ENCODE measurements at regions of chr1 and their contacts with region 1.

Region 1: DNA sequence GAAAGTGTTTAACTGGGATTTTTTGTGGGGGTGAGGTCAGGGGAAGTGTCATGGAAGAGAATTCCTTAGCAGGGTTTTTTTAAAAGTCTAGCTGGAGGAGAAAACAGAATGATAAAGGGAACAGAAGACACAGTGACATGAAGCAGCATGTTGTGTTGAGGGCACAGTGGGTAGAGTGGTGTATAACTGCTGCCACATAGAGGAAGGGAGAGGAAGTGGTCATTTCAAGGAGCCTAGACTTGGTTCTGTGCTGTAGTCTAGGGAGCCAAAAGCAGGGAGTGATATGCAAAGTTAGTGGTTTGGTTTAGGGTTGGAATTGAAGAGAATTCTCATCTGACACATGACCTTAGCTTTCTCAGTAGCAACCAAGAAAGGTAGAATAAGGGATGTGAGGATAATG is 10.2 kb downstream of the EEIG2 start:
- DNase-seq: peak; percentile 61
- H3K4me3 ChIP-seq: no peak overlapping the region
- H3K27ac ChIP-seq: no peak overlapping the region
- H3K4me1 ChIP-seq: peaks cover 24% of the 10 kb centered on the region
- H3K27me3 ChIP-seq: no peaks in the 10 kb centered on the region
- CTCF ChIP-seq: peak; percentile 63 to 67

Region 2: GRCh38 chr1:108482708-108483107 is 87.4 kb before region 1 on chr1:
- CTCF ChIA-PET with region 1: no interaction called
- dilution Hi-C with region 1: no loop called
- in situ Hi-C with region 1: no loop called
- intact Hi-C with region 1: no loop called
- DNase-seq: no peak
- H3K4me3 ChIP-seq: no peak overlapping the region
- H3K27ac ChIP-seq: no peak overlapping the region
- H3K4me1 ChIP-seq: no peaks in the 10 kb centered on the region
- H3K27me3 ChIP-seq: no peaks in the 10 kb centered on the region
- CTCF ChIP-seq: no peak

Region 3: GRCh38 chr1:108512239-108512981 is 57.7 kb before region 1 on chr1:
- CTCF ChIA-PET with region 1: no interaction called
- dilution Hi-C with region 1: no loop called
- in situ Hi-C with region 1: no loop called
- intact Hi-C with region 1: loop called (anchors 2 kb)
- DNase-seq: no peak
- H3K4me3 ChIP-seq: no peak overlapping the region
- H3K27ac ChIP-seq: no peak overlapping the region
- H3K4me1 ChIP-seq: no peaks in the 10 kb centered on the region
- H3K27me3 ChIP-seq: no peaks in the 10 kb centered on the region
- CTCF ChIP-seq: peak; percentile 68 to 81

Region 4: GRCh38 chr1:108559215-108560186 is 10.6 kb before region 1 on chr1 and contains the start of gene EEIG2:
- CTCF ChIA-PET with region 1: interaction called, 16 read pairs
- dilution Hi-C with region 1: no loop called
- in situ Hi-C with region 1: no loop called
- intact Hi-C with region 1: no loop called
- DNase-seq: peak; percentile 81
- H3K4me3 ChIP-seq: peak within 1 kb of the TSS; percentile 52 to 57 (median 53)
- H3K27ac ChIP-seq: peak within 1 kb of the TSS; percentile 25
- H3K4me1 ChIP-seq: peaks cover 22% of the 10 kb centered on the region
- H3K27me3 ChIP-seq: no peaks in the 10 kb centered on the region
- CTCF ChIP-seq: peak; percentile 34 to 58
- total RNA-seq, gene EEIG2: 4.5 to 10.0 TPM

Region 5: GRCh38 chr1:108657356-108658080 is 87.4 kb after region 1 on chr1:
- CTCF ChIA-PET with region 1: no interaction called
- dilution Hi-C with region 1: loop called (anchors 5 kb)
- in situ Hi-C with region 1: no loop called
- intact Hi-C with region 1: no loop called
- DNase-seq: no peak
- H3K4me3 ChIP-seq: no peak overlapping the region
- H3K27ac ChIP-seq: no peak overlapping the region
- H3K4me1 ChIP-seq: peaks cover 8% of the 10 kb centered on the region
- H3K27me3 ChIP-seq: no peaks in the 10 kb centered on the region
- CTCF ChIP-seq: no peak

Measured in mammary epithelial cell (primary cell).